WTC11 (cell line): ENCODE measurements at regions of chr15 and their contacts with region 1.

Region 1: GRCh38 chr15:65902378-65902777 is 33.1 kb downstream of the RAB11A start:
- DNase-seq: no peak
- ATAC-seq: peak; percentile 87
- H3K4me3 Mint-ChIP-seq: no peak overlapping the region
- H3K27ac Mint-ChIP-seq: peak overlapping the region; percentile 32
- H3K4me1 Mint-ChIP-seq: peaks cover 24% of the 10 kb centered on the region
- H3K27me3 Mint-ChIP-seq: no peaks in the 10 kb centered on the region
- CTCF ChIP-seq: no peak

Region 2: GRCh38 chr15:65916664-65917406 is 14.5 kb after region 1 on chr15:
- CTCF ChIA-PET with region 1: interaction called, 12 read pairs
- POLR2A ChIA-PET with region 1: no interaction called
- DNase-seq: peak; percentile 87
- ATAC-seq: peak; percentile 99
- H3K4me3 Mint-ChIP-seq: no peak overlapping the region
- H3K27ac Mint-ChIP-seq: 0 out of 2 replicates have a peak overlapping the region, but pooled peaks have one; percentile 57
- H3K4me1 Mint-ChIP-seq: peaks cover 18% of the 10 kb centered on the region
- H3K27me3 Mint-ChIP-seq: no peaks in the 10 kb centered on the region
- CTCF ChIP-seq: peak; percentile 37; the same call in 1 of the 2 replicates